ENCODE measurements at regions of chr4 and their contacts with region 1.

Region 1: DNA sequence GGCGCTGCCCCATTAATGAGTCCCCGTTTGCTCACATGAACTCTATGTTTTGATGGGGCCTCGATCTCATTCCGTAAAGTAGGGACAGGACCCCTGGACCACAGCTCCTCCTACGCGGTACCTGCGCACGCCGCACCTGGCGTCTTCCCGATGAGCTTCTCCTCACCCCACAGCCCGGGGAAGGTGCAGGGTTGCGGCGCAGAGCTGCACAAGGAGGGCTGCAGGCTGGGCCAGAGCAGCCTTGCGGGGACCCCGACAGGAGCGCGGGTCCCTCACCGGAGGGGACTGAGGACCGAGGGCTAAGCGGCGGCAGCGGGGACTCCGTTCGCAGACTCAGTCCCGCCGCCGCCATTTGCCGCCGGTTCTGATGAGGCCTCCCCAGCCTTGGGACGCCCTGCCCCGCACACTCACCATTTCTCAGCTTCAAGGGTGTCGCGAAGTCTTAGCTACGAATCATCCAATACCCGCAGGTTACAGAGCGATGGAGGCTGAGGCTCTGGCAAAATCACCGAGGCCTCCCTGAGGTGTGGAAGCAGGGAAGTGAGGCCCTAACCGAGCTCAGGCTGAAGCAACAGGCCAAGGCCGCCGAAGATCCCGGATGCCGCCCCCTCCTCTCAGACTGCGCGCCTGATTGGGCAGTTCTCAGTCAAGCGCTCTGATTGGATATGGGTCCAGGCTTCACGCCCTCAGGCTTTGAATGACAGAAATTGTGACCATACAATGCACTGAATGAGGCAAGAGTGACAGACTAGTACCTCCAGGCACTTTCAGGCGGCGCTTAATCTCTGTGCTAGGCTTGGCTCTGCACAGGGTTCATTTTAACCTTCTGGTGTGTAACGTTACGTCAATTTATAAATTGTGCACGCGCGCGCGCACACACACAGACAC is 25.1 kb downstream of the ZNF721 start:
- DNase-seq: peak; percentile 94
- H3K4me3 Mint-ChIP-seq: peak overlapping the region; percentile 99
- H3K27ac Mint-ChIP-seq: peak overlapping the region; percentile 95
- H3K4me1 Mint-ChIP-seq: peaks cover 26% of the 10 kb centered on the region
- H3K27me3 Mint-ChIP-seq: no peaks in the 10 kb centered on the region

Region 2: GRCh38 chr4:124275-125081 is 349.3 kb before region 1 on chr4 and contains the start of gene ZNF718:
- intact Hi-C with region 1: loop called (anchors 5 kb)
- DNase-seq: peak; percentile 91
- H3K4me3 Mint-ChIP-seq: peak within 1 kb of the TSS; percentile 96
- H3K27ac Mint-ChIP-seq: peak within 1 kb of the TSS; percentile 99
- H3K4me1 Mint-ChIP-seq: peaks cover 33% of the 10 kb centered on the region
- H3K27me3 Mint-ChIP-seq: no peaks in the 10 kb centered on the region
- total RNA-seq, gene ZNF718: 7.3 and 7.7 TPM in 2 replicates

Region 3: GRCh38 chr4:445410-445809 is 28.4 kb before region 1 on chr4:
- intact Hi-C with region 1: loop called (anchors 2 kb)
- DNase-seq: no peak
- H3K4me3 Mint-ChIP-seq: no peak overlapping the region
- H3K27ac Mint-ChIP-seq: no peak overlapping the region
- H3K4me1 Mint-ChIP-seq: no peaks in the 10 kb centered on the region
- H3K27me3 Mint-ChIP-seq: no peaks in the 10 kb centered on the region

Region 4: DNA sequence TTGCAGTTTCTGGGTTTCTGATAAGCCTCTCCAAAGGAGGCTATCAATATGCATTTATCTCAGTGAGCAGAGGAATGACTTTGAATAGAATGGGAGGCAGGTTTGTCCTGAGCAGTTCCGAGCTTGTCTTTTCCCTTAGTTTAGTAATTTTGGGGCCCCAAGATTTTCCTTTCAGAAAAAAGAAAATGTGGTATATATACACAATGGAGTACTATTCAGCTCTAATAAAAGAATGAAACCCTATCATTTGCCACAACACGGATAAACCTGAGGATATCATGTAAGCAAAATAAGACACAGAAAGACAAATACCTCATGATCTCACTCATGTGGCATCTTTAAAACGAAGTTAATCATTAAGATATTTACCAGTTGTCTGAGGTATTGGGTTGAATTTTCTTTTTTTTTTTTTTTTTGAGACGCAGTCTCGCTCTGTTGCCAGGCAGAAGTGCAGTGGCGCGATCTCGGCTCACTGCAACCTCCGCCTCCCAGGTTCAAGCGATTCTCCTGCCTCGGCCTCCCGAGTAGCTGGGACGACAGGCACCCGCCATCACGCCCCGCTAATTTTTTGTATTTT is 24.6 kb after region 1 on chr4:
- intact Hi-C with region 1: loop called (anchors 1 kb)
- DNase-seq: no peak
- H3K4me3 Mint-ChIP-seq: peak overlapping the region; percentile 97
- H3K27ac Mint-ChIP-seq: peak overlapping the region; percentile 96
- H3K4me1 Mint-ChIP-seq: peaks cover 32% of the 10 kb centered on the region
- H3K27me3 Mint-ChIP-seq: no peaks in the 10 kb centered on the region

Region 5: DNA sequence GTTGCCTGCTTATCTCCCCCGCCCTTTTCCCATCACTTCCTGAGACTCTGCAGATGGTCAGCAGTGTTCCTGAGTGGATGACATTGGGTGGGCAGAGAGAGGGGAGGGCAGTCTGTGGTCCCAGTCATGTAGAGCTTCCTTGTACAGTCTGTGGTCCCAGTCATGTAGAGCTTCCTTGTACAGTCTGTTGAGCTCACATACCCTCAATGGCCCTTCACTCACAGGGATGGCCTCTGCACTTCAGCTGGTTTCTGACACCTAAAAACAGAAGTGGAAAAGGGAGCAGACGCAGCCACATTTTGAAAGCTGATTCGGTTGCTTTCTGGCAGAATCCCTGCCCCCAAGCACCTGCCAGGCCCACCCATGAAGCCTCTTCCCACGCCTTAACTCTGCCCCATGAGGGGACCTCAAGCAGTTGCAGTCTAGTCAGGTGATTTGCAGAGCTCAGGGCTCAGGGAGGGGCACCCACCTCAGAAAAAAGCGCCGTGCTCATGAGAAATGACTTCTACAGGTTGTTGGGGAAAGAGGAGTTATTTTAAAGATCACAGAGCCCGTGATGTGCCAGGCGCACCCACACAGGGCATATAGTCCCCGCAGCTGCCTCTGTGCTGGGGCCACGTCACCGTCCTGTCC is 105.8 kb after region 1 on chr4:
- intact Hi-C with region 1: no loop called
- DNase-seq: no peak
- H3K4me3 Mint-ChIP-seq: no peak overlapping the region
- H3K27ac Mint-ChIP-seq: no peak overlapping the region
- H3K4me1 Mint-ChIP-seq: peaks cover 4% of the 10 kb centered on the region
- H3K27me3 Mint-ChIP-seq: peaks cover 30% of the 10 kb centered on the region